Tibial artery (tissue), 4 donors: ENCODE measurements at regions of chr3 and their contacts with region 1.

Region 1: GRCh38 chr3:132317229-132317948 is at the start of gene ACP3:
- DNase-seq: peak; percentile 59 to 69
- H3K4me3 ChIP-seq: peak within 1 kb of the TSS in 1 of 2 donors; percentile 3
- H3K27ac ChIP-seq: no peak within 1 kb of the TSS
- H3K4me1 ChIP-seq: peaks cover 0 to 8% (median 0%) of the 10 kb centered on the region in 4 donors
- H3K27me3 ChIP-seq: peaks cover 0 to 3% of the 10 kb centered on the region in 2 donors
- CTCF ChIP-seq: no peak

Region 2: GRCh38 chr3:130644628-130645253 is 1672.6 kb before region 1 on chr3:
- intact Hi-C with region 1: loop called (anchors 5 kb)
- DNase-seq: no peak
- H3K4me3 ChIP-seq: no peak overlapping the region
- H3K27ac ChIP-seq: no peak overlapping the region
- H3K4me1 ChIP-seq: no peaks in the 10 kb centered on the region
- H3K27me3 ChIP-seq: no peaks in the 10 kb centered on the region
- CTCF ChIP-seq: no peak